Left colon (tissue), 2 donors: ENCODE measurements at regions of chr2 and their contacts with region 1.

Region 1: GRCh38 chr2:107222466-107222865 is 336.5 kb upstream of the ST6GAL2 start:
- DNase-seq: no peak
- ATAC-seq: no peak

Region 2: DNA sequence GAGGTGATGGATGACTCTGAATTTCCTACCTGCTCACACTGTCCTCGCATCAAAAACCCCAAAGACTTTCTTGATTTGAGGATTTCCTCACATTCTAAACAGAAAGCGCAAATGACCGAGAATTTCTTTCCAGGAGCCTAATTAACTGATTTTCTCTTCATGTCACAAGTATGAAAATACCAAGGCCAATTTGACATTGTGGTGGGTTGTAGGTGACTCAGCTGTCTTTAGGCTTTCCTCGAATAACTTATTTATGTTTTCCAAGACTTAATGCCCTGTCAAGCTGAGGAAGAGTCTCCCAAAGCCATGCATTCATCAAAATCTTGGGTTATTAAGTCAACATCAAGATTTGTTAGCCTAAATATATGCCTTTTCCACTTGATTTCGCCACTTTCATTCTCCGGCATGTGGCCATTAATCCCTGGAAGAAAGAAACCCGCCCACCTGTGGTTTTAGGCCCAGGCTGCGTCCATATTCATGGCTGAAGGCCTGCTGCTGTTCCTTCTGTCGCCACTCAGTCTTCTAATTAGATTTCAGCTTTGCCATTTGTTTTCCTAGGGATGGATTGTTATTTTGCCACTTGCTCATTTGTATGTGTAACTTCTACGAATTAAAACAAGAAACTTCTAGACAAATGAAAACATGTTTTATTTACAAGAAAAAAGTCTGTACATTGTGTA is 421.4 kb before region 1 on chr2:
- intact Hi-C with region 1: loop called in 1 of 2 experiments (anchors 5 kb)
- DNase-seq: no peak
- ATAC-seq: no peak

Region 3: GRCh38 chr2:106941372-106941993 is 281.0 kb before region 1 on chr2:
- intact Hi-C with region 1: no loop called
- DNase-seq: no peak
- ATAC-seq: no peak

Region 4: DNA sequence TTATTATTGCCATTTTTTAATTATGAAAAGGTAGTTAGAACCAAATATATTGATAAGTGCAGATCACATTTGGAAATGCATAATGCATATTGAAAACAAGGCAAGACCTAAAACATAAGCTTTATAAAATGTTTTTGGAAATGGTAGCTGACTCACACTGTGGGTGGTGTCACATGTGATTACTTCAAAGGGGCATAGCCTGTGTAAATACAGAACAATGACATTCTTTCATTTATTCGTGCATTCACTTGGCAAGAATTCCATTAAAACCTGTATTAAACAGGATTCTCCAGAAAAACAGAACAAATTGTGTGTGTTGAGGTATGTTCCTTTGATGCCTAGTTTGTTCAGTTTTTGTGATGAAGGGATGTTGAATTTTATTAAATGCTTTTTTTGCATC is 90.8 kb after region 1 on chr2:
- intact Hi-C with region 1: no loop called
- DNase-seq: no peak
- ATAC-seq: no peak